Posterior vena cava (tissue), 2 donors: ENCODE measurements at regions of chr4 and their contacts with region 1.

Region 1: DNA sequence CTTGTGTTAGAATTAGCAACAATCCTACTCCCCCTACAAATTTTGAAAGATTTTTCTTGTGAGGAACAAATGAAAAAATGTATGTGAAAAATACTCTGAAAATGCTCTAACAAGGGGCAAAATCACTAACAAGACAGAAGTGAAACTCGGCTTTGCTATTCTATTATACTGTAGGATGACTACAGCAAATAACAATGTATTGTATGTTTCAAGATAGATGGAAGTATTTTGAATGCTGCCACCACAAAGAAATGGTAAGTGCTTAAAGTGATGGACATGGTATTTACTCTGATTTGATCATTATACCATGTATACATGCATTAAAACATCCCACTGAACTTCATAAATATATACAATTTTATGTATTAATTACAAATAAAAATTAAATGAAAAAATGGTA is 192.8 kb downstream of the SPOCK3 start:
- DNase-seq: no peak

Region 2: DNA sequence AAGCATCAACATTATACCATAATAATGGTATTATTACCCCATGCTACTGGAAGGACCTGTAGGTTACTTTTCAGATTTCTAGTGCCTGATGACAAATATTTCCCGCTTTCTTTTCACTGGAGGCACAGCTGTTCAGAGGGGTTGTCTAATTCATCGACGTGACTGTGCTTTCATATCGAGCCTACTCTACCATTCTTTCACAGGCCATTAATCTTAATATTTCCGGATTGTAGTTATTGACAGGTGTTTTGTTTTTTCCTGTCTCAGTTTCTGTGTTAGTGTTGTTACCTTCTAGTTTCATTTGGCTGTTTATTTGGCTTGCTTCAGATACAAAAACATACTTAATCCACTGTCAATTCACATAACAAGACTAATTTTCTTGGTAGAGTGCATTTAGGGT is 138.1 kb before region 1 on chr4:
- intact Hi-C with region 1: loop called in 1 of 2 experiments (anchors 5 kb)
- DNase-seq: no peak

Region 3: GRCh38 chr4:167854881-167855280 is 813.4 kb after region 1 on chr4:
- intact Hi-C with region 1: no loop called
- DNase-seq: no peak